ENCODE measurements at regions of chr6 and their contacts with region 1.

Region 1: GRCh38 chr6:31016659-31017299 is 6.5 kb downstream of the MUC22 start:
- DNase-seq: no peak

Region 2: DNA sequence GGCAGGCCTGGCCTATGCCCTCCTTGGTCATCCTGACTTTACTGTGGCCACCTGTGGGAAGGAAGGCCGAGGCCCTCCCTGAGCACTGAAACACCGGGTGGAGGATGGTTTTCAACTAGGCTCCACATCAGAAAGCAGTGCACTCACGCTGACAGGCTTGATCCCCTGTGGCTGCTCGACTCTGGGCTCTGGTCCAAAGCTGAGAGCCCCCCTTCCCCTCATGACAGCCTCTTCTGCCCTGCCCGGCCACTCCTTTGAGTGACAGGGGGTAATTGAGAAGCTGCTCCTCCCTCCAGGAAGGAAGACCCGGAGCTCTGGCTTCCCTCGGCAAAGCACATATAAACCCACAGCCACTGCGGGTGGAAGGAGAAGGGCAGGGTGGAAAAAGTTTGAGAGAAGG is 37.1 kb after region 1 on chr6:
- intact Hi-C with region 1: loop called in 1 of 2 experiments (anchors 1 kb)
- DNase-seq: no peak